Vagina (tissue), 2 donors: ENCODE measurements at regions of chr20 and their contacts with region 1.

Region 1: DNA sequence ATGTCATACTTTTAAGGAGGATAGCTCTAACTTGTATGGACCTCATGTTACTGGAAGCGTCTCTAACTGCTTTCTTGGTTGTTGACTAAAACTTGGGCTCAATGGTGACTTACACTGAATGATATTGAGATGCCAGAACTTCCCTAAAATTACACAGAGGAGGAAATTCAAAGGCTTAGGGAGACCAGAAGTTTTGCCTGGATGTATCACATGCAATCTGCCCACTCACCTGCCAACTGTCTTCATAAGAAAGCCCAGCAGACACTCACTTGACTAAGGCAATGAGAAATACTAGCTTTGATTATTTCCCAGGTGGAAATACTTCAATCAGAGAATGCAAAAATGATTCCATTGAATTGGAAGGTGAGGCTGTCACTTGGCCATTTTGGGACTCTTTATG is 51.2 kb upstream of the PDYN start:
- DNase-seq: no peak
- H3K4me3 ChIP-seq: no peak overlapping the region
- H3K27ac ChIP-seq: no peak overlapping the region
- H3K4me1 ChIP-seq: no peaks in the 10 kb centered on the region
- H3K27me3 ChIP-seq: no peaks in the 10 kb centered on the region
- CTCF ChIP-seq: no peak
- POLR2A ChIP-seq: no peak

Region 2: GRCh38 chr20:2080533-2081224 is 35.6 kb after region 1 on chr20:
- intact Hi-C with region 1: loop called (anchors 2 kb)
- DNase-seq: no peak
- H3K4me3 ChIP-seq: no peak overlapping the region
- H3K27ac ChIP-seq: no peak overlapping the region
- H3K4me1 ChIP-seq: no peaks in the 10 kb centered on the region
- H3K27me3 ChIP-seq: no peaks in the 10 kb centered on the region
- CTCF ChIP-seq: no peak
- POLR2A ChIP-seq: no peak